HepG2 (cell line): ENCODE measurements at regions of chr18 and their contacts with region 1.

Region 1: DNA sequence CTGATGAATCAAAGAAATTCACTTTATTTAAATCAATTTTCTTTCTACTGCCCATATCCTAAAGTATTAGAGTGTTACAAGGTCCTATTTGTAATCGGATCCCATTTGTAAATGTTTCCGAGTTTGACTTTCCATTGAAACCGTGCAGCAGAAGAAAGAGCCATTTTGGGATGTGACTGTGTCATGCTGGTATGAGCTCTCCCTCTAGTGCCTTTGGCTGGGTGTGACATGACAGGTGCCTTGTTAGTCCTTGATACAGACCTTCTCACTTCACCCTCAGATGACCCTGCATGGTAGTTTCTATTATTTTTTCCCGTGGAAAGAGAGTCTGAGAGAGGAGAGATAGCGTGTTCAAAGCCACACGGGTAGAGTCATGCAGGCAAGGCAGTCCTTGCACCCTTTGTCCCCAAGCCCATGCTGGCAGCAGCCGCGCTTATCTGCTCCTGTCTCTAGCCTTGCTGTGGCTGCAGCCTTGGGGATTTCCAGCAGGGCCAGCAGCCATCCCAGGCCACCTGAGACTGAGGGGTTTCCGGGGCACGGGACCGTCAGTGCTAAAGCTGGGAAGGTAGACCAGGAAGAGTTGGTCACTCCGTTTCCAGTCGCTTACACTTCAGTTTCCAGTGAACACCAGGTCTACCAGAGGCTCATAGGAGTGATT is 21.4 kb downstream of the CHMP1B start:
- DNase-seq: peak; percentile 71
- ATAC-seq: peak; percentile 98
- H3K4me3 ChIP-seq: peak overlapping the region in 1 of 3 experiments; percentile 10; a peak in 1 of 6 replicates
- H3K27ac ChIP-seq: no peak overlapping the region
- H3K4me1 ChIP-seq: peaks cover 19% of the 10 kb centered on the region
- H3K27me3 ChIP-seq: no peaks in the 10 kb centered on the region
- CTCF ChIP-seq: peak; percentile 88
- EP300 ChIP-seq: no peak
- POLR2A ChIP-seq: no peak
- RAD21 ChIP-seq: peak; percentile 86

Region 2: GRCh38 chr18:11733031-11733430 is 139.6 kb before region 1 on chr18:
- CTCF ChIA-PET with region 1: interaction called, 14 read pairs
- POLR2A ChIA-PET with region 1: no interaction called
- in situ Hi-C with region 1: no loop called
- intact Hi-C with region 1: loop called (anchors 1 kb)
- DNase-seq: peak; percentile 32
- ATAC-seq: peak; percentile 98
- H3K4me3 ChIP-seq: peak overlapping the region in 1 of 3 experiments; percentile 12; a peak in 1 of 6 replicates
- H3K27ac ChIP-seq: no peak overlapping the region
- H3K4me1 ChIP-seq: no peaks in the 10 kb centered on the region
- H3K27me3 ChIP-seq: peaks cover 0 to 9% of the 10 kb centered on the region in 2 experiments; a peak in 2 of 5 replicates
- CTCF ChIP-seq: peak; percentile 93
- EP300 ChIP-seq: no peak
- POLR2A ChIP-seq: no peak
- RAD21 ChIP-seq: peak; percentile 85

Region 3: DNA sequence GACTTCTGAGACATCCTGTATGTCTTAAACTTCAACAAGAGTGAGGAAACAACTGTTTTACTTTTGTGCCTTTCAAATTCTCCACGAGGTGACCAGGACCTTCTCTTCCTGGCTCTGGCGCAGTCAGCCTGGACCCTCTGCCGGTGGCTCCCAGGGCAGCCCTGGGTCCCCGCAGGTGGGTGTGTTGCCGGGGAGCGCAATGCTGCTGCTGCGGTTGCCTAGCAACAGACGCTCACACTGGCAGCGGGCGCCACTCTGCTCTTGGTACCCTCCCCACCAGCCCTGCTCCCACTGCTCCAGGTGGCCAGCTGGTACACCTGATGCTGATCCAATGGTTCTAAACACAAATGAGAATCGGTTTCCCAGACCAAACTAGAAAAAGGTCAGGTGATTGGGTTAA is 124.9 kb before region 1 on chr18:
- CTCF ChIA-PET with region 1: no interaction called
- POLR2A ChIA-PET with region 1: no interaction called
- in situ Hi-C with region 1: loop called (anchors 5 kb)
- intact Hi-C with region 1: no loop called
- DNase-seq: no peak
- ATAC-seq: no peak
- H3K4me3 ChIP-seq: no peak overlapping the region
- H3K27ac ChIP-seq: no peak overlapping the region
- H3K4me1 ChIP-seq: no peaks in the 10 kb centered on the region
- H3K27me3 ChIP-seq: peaks cover 2 to 25% of the 10 kb centered on the region in 2 experiments; a peak in 4 of 5 replicates
- CTCF ChIP-seq: no peak
- EP300 ChIP-seq: no peak
- POLR2A ChIP-seq: no peak
- RAD21 ChIP-seq: no peak

Region 4: GRCh38 chr18:11826836-11827235 is 45.8 kb before region 1 on chr18:
- CTCF ChIA-PET with region 1: interaction called, 14 read pairs
- POLR2A ChIA-PET with region 1: no interaction called
- in situ Hi-C with region 1: loop called (anchors 5 kb)
- intact Hi-C with region 1: loop called (anchors 1 kb)
- DNase-seq: peak; percentile 34
- ATAC-seq: peak; percentile 94
- H3K4me3 ChIP-seq: no peak overlapping the region
- H3K27ac ChIP-seq: no peak overlapping the region
- H3K4me1 ChIP-seq: no peaks in the 10 kb centered on the region
- H3K27me3 ChIP-seq: no peaks in the 10 kb centered on the region
- CTCF ChIP-seq: peak; percentile 82
- EP300 ChIP-seq: no peak
- POLR2A ChIP-seq: no peak
- RAD21 ChIP-seq: peak; percentile 83

Region 5: GRCh38 chr18:11851146-11851805 is 21.3 kb before region 1 on chr18 and contains the start of gene CHMP1B:
- CTCF ChIA-PET with region 1: no interaction called
- POLR2A ChIA-PET with region 1: no interaction called
- in situ Hi-C with region 1: no loop called
- intact Hi-C with region 1: loop called (anchors 1 kb)
- DNase-seq: peak; percentile 91
- ATAC-seq: peak; percentile 91
- H3K4me3 ChIP-seq: peak within 1 kb of the TSS; percentile 68 to 93 (median 83)
- H3K27ac ChIP-seq: peak within 1 kb of the TSS; percentile 80
- H3K4me1 ChIP-seq: peaks cover 49% of the 10 kb centered on the region
- H3K27me3 ChIP-seq: no peaks in the 10 kb centered on the region; a peak in 2 of 5 replicates
- CTCF ChIP-seq: no peak
- EP300 ChIP-seq: peak in 1 of 2 experiments; percentile 39; a peak in 2 of 4 replicates
- POLR2A ChIP-seq: peak; percentile 93 to 96
- RAD21 ChIP-seq: no peak
- total RNA-seq, gene CHMP1B: 18.8 and 24.0 TPM in 2 replicates

Region 6: DNA sequence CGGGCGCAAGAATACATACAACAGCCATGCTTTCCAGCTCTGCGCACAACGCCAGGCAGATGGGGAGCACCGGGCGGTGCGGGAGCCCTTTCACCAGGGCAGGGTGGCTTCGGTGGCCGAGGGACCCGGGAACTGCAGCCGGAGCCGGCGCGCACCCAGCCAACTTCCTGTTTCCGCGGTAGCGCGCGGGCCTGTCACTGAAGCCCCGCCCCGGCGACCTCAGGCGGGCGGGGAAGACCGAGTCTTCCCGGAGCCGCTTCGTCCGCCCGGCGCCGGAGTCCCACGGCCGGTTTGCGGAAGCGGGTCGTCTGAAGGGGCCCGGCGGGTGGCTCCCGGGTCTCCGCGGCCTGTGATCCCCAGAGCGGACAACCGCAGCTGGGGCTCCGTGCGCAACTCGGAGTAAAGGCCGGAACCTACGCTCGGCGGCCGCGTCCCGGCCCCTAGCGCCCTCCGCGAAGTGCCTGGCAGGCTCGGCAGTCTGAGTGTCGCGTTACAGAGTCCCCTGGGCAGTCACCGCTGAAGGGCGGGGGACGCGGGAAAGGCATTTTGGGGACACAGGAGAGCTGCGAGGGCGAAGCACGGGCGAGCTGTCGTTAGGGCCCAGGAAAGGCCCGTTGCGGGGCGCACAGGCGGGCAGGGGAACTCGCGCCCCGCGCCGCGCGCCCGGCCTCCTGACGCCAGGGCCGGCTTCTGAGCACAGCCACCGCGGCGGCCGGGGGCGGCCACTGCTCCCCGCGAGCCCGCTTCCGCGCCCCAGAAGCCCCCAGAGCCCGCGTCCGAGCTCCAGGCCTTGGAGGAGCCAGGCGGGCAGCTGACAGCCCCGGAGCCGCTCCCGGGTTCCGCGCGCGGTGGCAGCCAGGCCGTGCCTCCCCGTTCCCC is 35.8 kb after region 1 on chr18 and contains the start of gene MPPE1:
- CTCF ChIA-PET with region 1: no interaction called
- POLR2A ChIA-PET with region 1: no interaction called
- in situ Hi-C with region 1: no loop called
- intact Hi-C with region 1: loop called (anchors 5 kb)
- DNase-seq: peak; percentile 73
- ATAC-seq: peak; percentile 95
- H3K4me3 ChIP-seq: peak within 1 kb of the TSS; percentile 68 to 86 (median 82)
- H3K27ac ChIP-seq: peak within 1 kb of the TSS; percentile 96
- H3K4me1 ChIP-seq: peaks cover 30% of the 10 kb centered on the region
- H3K27me3 ChIP-seq: no peaks in the 10 kb centered on the region; a peak in 1 of 5 replicates
- CTCF ChIP-seq: peak; percentile 26; the same call in 1 of the 2 replicates
- EP300 ChIP-seq: no peak
- POLR2A ChIP-seq: peak; percentile 74 to 78
- RAD21 ChIP-seq: no peak
- total RNA-seq, gene MPPE1: 5.4 and 11.9 TPM in 2 replicates